Endothelial cell of umbilical vein (primary cell): ENCODE measurements at regions of chr4 and their contacts with region 1.

Region 1: GRCh38 chr4:150078637-150079581 is 664 bp downstream of the DCLK2 start:
- DNase-seq: peak; percentile 57
- H3K4me3 ChIP-seq: peak overlapping the region; percentile 47 to 65 (median 59)
- H3K27ac ChIP-seq: peak overlapping the region; percentile 35
- H3K4me1 ChIP-seq: peaks cover 9% of the 10 kb centered on the region
- H3K27me3 ChIP-seq: no peaks in the 10 kb centered on the region
- CTCF ChIP-seq: no peak
- POLR2A ChIP-seq: no peak

Region 2: GRCh38 chr4:149595500-149595899 is 483.4 kb before region 1 on chr4:
- CTCF ChIA-PET with region 1: no interaction called
- POLR2A ChIA-PET with region 1: no interaction called
- dilution Hi-C with region 1: no loop called
- intact Hi-C with region 1: no loop called
- DNase-seq: no peak
- H3K4me3 ChIP-seq: no peak overlapping the region
- H3K27ac ChIP-seq: no peak overlapping the region
- H3K4me1 ChIP-seq: no peaks in the 10 kb centered on the region
- H3K27me3 ChIP-seq: no peaks in the 10 kb centered on the region
- CTCF ChIP-seq: no peak
- POLR2A ChIP-seq: no peak

Region 3: DNA sequence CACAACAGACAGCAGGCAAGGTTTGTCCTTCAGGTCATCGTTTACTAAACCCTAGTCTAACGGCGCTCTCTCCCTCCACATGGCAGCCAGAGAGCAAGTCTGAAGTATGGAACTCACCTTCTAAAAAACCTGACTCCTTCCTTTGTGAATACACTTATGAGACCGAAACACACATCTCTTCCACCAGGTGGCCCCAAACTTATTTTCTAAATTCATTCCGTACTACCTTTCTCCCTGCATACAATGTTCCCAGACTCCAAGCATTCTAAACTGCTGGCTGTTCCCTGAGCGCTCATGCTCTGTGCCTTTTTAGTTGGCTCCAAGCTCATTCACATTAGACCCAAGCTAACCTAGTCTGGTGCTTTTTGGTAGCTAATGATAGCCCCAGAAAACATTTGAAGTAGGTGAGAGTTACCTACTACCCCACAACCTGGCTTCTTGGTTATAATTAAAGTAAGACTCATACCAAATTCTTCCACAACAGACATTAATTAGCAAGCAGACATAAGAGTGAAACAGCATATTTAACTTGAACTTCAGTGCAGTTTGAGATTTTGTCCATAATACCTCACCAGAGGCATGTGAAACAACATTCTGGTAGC is 68.3 kb before region 1 on chr4:
- CTCF ChIA-PET with region 1: interaction called, 7 read pairs
- POLR2A ChIA-PET with region 1: no interaction called
- dilution Hi-C with region 1: no loop called
- intact Hi-C with region 1: loop called (anchors 5 kb)
- DNase-seq: peak; percentile 69
- H3K4me3 ChIP-seq: no peak overlapping the region
- H3K27ac ChIP-seq: no peak overlapping the region
- H3K4me1 ChIP-seq: no peaks in the 10 kb centered on the region
- H3K27me3 ChIP-seq: no peaks in the 10 kb centered on the region
- CTCF ChIP-seq: peak; percentile 42 to 49
- POLR2A ChIP-seq: no peak

Region 4: GRCh38 chr4:150056569-150056968 is 22.3 kb before region 1 on chr4:
- CTCF ChIA-PET with region 1: no interaction called
- POLR2A ChIA-PET with region 1: no interaction called
- dilution Hi-C with region 1: no loop called
- intact Hi-C with region 1: no loop called
- DNase-seq: no peak
- H3K4me3 ChIP-seq: no peak overlapping the region
- H3K27ac ChIP-seq: no peak overlapping the region
- H3K4me1 ChIP-seq: peaks cover 3% of the 10 kb centered on the region
- H3K27me3 ChIP-seq: no peaks in the 10 kb centered on the region
- CTCF ChIP-seq: no peak
- POLR2A ChIP-seq: no peak

Region 5: DNA sequence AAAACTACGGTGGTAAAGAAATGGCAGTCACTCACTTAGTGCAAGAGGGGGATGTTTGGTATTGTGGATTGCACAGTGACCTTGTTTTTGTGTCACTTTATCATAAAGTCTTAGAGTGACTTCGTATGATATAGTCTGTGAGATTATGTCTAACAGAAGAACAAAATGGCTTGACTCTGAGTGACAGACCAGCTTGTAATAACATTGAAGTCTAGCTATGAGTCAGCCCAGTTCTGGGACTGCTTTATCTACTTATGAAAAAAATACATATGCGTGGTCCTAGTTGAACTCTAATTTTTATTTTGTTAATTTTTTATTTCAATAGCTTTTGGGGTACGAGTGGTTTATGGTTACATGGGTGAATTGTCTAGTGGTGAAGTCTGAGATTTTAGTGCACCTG is 19.3 kb after region 1 on chr4:
- CTCF ChIA-PET with region 1: interaction called, 11 read pairs
- POLR2A ChIA-PET with region 1: no interaction called
- dilution Hi-C with region 1: no loop called
- intact Hi-C with region 1: loop called (anchors 2 kb)
- DNase-seq: peak; percentile 14
- H3K4me3 ChIP-seq: no peak overlapping the region
- H3K27ac ChIP-seq: no peak overlapping the region
- H3K4me1 ChIP-seq: no peaks in the 10 kb centered on the region
- H3K27me3 ChIP-seq: no peaks in the 10 kb centered on the region
- CTCF ChIP-seq: no peak
- POLR2A ChIP-seq: no peak

Region 6: DNA sequence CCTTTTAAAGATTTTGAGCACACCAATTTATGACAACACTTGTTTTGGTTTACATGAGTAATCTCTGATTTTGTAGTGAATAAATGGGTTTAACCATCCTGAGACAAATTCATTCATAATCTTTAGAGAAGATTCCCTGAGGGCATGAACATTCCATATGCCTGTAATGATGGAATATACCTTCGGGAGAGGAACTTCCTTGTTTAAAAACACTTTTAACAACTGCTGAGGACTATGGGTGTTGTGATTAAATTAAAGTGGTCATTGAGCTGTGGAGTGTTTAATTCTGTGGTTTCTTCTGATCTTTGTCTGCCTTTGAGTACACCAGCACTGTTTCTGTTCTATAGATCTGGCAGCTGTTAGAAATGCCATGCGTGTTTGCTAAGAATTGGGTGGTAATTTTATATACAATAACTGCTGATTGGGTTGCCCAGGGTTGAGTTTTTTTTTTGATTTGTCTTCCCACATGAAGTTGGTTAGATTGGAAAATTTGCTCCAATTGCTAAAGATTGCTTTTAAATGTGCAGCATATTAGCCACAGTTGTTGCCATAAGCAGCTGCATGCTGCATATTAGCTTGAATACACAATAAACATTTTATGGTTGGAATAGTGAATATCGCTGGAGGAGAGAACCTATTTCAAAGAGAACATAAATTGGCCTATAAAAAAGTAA is 86.2 kb after region 1 on chr4:
- CTCF ChIA-PET with region 1: no interaction called
- POLR2A ChIA-PET with region 1: no interaction called
- dilution Hi-C with region 1: no loop called
- intact Hi-C with region 1: loop called (anchors 1 kb)
- DNase-seq: no peak
- H3K4me3 ChIP-seq: no peak overlapping the region
- H3K27ac ChIP-seq: no peak overlapping the region
- H3K4me1 ChIP-seq: peaks cover 11% of the 10 kb centered on the region
- H3K27me3 ChIP-seq: no peaks in the 10 kb centered on the region
- CTCF ChIP-seq: no peak
- POLR2A ChIP-seq: no peak

Region 7: DNA sequence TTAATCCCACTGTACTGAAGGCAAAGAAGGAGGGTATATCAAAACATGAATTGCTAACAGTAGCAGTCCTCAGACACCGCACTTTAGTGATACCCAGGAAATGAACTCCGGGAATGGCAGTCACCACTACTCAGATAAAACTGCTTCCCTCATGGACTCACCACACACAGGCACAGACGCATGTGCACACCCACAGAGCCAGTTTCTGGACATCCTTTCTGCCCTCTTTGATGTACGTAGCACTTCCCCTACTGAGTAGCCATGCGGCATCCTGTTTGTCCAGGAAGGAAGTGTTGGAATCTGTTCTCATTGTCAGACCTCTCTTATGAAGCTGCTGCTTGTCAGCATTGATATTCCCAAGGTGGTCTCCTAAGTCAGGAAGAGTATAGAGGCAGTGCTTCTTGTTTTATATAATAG is 95.1 kb after region 1 on chr4:
- CTCF ChIA-PET with region 1: interaction called, 4 read pairs
- POLR2A ChIA-PET with region 1: no interaction called
- dilution Hi-C with region 1: no loop called
- intact Hi-C with region 1: loop called (anchors 2 kb)
- DNase-seq: peak; percentile 76
- H3K4me3 ChIP-seq: no peak overlapping the region
- H3K27ac ChIP-seq: peak overlapping the region; percentile 65
- H3K4me1 ChIP-seq: peaks cover 19% of the 10 kb centered on the region
- H3K27me3 ChIP-seq: no peaks in the 10 kb centered on the region
- CTCF ChIP-seq: no peak
- POLR2A ChIP-seq: peak; percentile 29